A549 (cell line): ENCODE measurements at regions of chr1 and their contacts with region 1.

Region 1: DNA sequence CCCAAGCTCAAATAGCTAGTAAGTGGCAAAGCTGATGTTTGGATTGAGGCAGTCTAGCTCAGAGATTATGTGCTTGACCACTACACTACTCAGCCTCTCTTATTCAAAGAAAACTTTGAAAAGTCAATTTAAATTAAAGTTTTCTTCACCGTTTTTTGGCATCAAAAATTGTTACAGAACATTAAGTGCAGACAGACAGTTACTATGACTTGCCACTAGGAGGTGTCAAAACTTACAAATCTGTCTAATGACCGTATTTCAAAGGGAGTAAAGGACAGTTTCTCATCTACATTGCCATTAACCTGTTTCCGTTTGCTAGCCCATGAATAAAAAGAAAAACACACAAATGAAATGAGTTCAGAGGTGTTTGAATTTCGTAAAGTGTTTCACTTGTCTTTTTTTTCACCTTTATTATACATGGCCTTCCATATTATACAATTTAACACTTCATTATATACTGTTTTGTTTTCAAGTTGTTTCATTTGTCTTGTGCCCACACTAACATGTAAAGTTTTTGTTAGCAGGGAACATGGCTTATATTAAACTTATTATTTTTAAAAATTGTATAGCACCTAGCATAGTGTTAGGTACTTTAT is 57.4 kb upstream of the MTF2 start:
- DNase-seq: peak; percentile 26 to 48
- ATAC-seq: peak; percentile 54 to 77; a peak in 3 of 6 replicates
- H3K4me3 ChIP-seq: no peak overlapping the region
- H3K27ac ChIP-seq: no peak overlapping the region
- H3K4me1 ChIP-seq: no peaks in the 10 kb centered on the region
- CTCF ChIP-seq: peak; percentile 58
- EP300 ChIP-seq: no peak
- POLR2A ChIP-seq: no peak
- RAD21 ChIP-seq: peak; percentile 64 to 69

Region 2: GRCh38 chr1:93043057-93043557 is 21.5 kb after region 1 on chr1:
- CTCF ChIA-PET with region 1: no interaction called
- POLR2A ChIA-PET with region 1: no interaction called
- DNase-seq: no peak
- ATAC-seq: no peak
- H3K4me3 ChIP-seq: no peak overlapping the region
- H3K27ac ChIP-seq: no peak overlapping the region
- H3K4me1 ChIP-seq: 0 out of 3 replicates have a peak, but pooled peaks cover 6% of the 10 kb centered on the region
- CTCF ChIP-seq: no peak
- EP300 ChIP-seq: no peak
- POLR2A ChIP-seq: no peak
- RAD21 ChIP-seq: no peak

Region 3: GRCh38 chr1:93061895-93062792 is 40.5 kb after region 1 on chr1:
- CTCF ChIA-PET with region 1: interaction called, 42 read pairs
- POLR2A ChIA-PET with region 1: no interaction called
- DNase-seq: peak in 1 of 2 experiments; percentile 32
- ATAC-seq: peak; percentile 76 to 83; a peak in 5 of 6 replicates
- H3K4me3 ChIP-seq: no peak overlapping the region
- H3K27ac ChIP-seq: no peak overlapping the region
- H3K4me1 ChIP-seq: no peaks in the 10 kb centered on the region
- CTCF ChIP-seq: peak; percentile 54
- EP300 ChIP-seq: no peak
- POLR2A ChIP-seq: no peak
- RAD21 ChIP-seq: peak; percentile 59 to 65